SK-N-SH (cell line): ENCODE measurements at regions of chr11 and their contacts with region 1.

Region 1: DNA sequence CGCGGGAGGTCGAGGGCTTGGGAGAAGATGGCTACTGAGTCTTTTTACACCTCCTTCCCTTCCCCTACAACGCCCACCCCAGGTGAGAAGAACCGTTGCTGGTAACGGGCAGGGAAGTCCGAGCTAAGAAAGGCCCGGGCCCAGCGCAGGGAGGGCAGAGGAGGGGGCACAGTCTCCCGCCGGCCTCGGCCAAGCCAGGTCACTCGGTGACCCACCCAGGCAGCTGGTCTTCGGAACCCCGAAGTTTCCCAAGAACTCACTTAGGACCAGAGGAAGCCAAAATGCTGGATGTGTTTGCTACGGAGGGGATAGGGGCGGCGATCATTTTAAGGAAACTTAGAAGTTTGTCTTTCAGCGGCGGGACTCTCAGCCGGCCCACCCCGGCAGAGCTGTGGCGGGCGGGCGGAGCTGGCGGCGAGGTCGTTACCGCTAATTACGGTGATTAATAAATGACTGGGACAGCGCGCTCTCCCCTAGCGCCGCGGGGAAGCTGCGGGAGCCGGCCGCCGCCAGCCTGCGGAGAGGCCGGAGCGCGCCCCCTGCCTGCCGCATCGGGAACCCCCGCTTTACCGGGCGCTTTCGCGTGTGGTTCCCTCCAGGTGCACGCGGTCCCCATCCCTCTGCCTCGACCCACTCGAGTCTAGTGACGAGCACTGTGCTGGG is 820 bp downstream of the ROBO3 start:
- DNase-seq: peak; percentile 91
- H3K4me3 ChIP-seq: peak overlapping the region; percentile 43 to 64
- H3K27ac ChIP-seq: no peak overlapping the region
- H3K4me1 ChIP-seq: peaks cover 4 to 31% of the 10 kb centered on the region in 2 experiments; a peak in 1 of 4 replicates
- H3K27me3 ChIP-seq: peaks cover 78% of the 10 kb centered on the region
- CTCF ChIP-seq: peak; percentile 83
- EP300 ChIP-seq: no peak
- RAD21 ChIP-seq: peak; percentile 46

Region 2: GRCh38 chr11:124673333-124674167 is 192.5 kb before region 1 on chr11 and contains the starts of genes SIAE and SPA17:
- CTCF ChIA-PET with region 1: interaction called, 53 read pairs
- POLR2A ChIA-PET with region 1: interaction called, 4 read pairs
- DNase-seq: peak; percentile 97
- H3K4me3 ChIP-seq: peak within 1 kb of the TSS; percentile 87 to 89
- H3K27ac ChIP-seq: peak within 1 kb of the TSS; percentile 87 to 88
- H3K4me1 ChIP-seq: peaks cover 0 to 11% of the 10 kb centered on the region in 2 experiments; a peak in 1 of 4 replicates
- H3K27me3 ChIP-seq: no peaks in the 10 kb centered on the region
- CTCF ChIP-seq: no peak
- EP300 ChIP-seq: peak in 1 of 2 experiments; percentile 48; a peak in 1 of 4 replicates
- RAD21 ChIP-seq: no peak
- polyA plus RNA-seq, gene SIAE: 27.9 and 47.0 TPM in 2 replicates
- polyA plus RNA-seq, gene SPA17: 7.7 and 11.7 TPM in 2 replicates

Region 3: GRCh38 chr11:124800226-124800929 is 65.7 kb before region 1 on chr11 and contains the start of gene MSANTD2:
- CTCF ChIA-PET with region 1: interaction called, 18 read pairs
- POLR2A ChIA-PET with region 1: interaction called, 4 read pairs
- DNase-seq: peak; percentile 93
- H3K4me3 ChIP-seq: peak within 1 kb of the TSS; percentile 68 to 70
- H3K27ac ChIP-seq: peak within 1 kb of the TSS; percentile 95 to 97
- H3K4me1 ChIP-seq: peaks cover 8 to 10% of the 10 kb centered on the region in 2 experiments; a peak in 3 of 4 replicates
- H3K27me3 ChIP-seq: no peaks in the 10 kb centered on the region
- CTCF ChIP-seq: no peak
- EP300 ChIP-seq: 0 out of 4 replicates have a peak, but pooled peaks of 1 of the 2 experiments have one; percentile 8
- RAD21 ChIP-seq: 0 out of 2 replicates have a peak, but pooled peaks have one; percentile 2
- polyA plus RNA-seq, gene MSANTD2: 6.4 and 8.5 TPM in 2 replicates

Region 4: GRCh38 chr11:124846071-124846719 is 19.9 kb before region 1 on chr11:
- CTCF ChIA-PET with region 1: interaction called, 220 read pairs
- POLR2A ChIA-PET with region 1: no interaction called
- DNase-seq: no peak
- H3K4me3 ChIP-seq: no peak overlapping the region
- H3K27ac ChIP-seq: no peak overlapping the region
- H3K4me1 ChIP-seq: peaks cover 0 to 12% of the 10 kb centered on the region in 2 experiments; a peak in 1 of 4 replicates
- H3K27me3 ChIP-seq: peaks cover 68% of the 10 kb centered on the region; the same call in 1 of the 2 replicates
- CTCF ChIP-seq: no peak
- EP300 ChIP-seq: no peak
- RAD21 ChIP-seq: no peak

Region 5: GRCh38 chr11:124882339-124883071 is 16.5 kb after region 1 on chr11:
- CTCF ChIA-PET with region 1: interaction called, 55 read pairs
- POLR2A ChIA-PET with region 1: no interaction called
- DNase-seq: no peak
- H3K4me3 ChIP-seq: no peak overlapping the region
- H3K27ac ChIP-seq: peak overlapping the region in 1 of 2 experiments; percentile 24; a peak in 1 of 4 replicates
- H3K4me1 ChIP-seq: peaks cover 0 to 11% of the 10 kb centered on the region in 2 experiments; a peak in 1 of 4 replicates
- H3K27me3 ChIP-seq: no peaks in the 10 kb centered on the region
- CTCF ChIP-seq: no peak
- EP300 ChIP-seq: no peak
- RAD21 ChIP-seq: no peak

Region 6: GRCh38 chr11:124917115-124917637 is 51.1 kb after region 1 on chr11:
- CTCF ChIA-PET with region 1: no interaction called
- POLR2A ChIA-PET with region 1: no interaction called
- DNase-seq: no peak
- H3K4me3 ChIP-seq: no peak overlapping the region
- H3K27ac ChIP-seq: no peak overlapping the region
- H3K4me1 ChIP-seq: peaks cover 0 to 3% of the 10 kb centered on the region in 2 experiments; a peak in 1 of 4 replicates
- H3K27me3 ChIP-seq: no peaks in the 10 kb centered on the region
- CTCF ChIP-seq: no peak
- EP300 ChIP-seq: no peak
- RAD21 ChIP-seq: no peak

Region 7: GRCh38 chr11:125263268-125263790 is 397.3 kb after region 1 on chr11:
- CTCF ChIA-PET with region 1: no interaction called
- POLR2A ChIA-PET with region 1: no interaction called
- DNase-seq: peak; percentile 83
- H3K4me3 ChIP-seq: no peak overlapping the region
- H3K27ac ChIP-seq: no peak overlapping the region
- H3K4me1 ChIP-seq: peaks cover 0 to 14% of the 10 kb centered on the region in 2 experiments; a peak in 1 of 4 replicates
- H3K27me3 ChIP-seq: no peaks in the 10 kb centered on the region; the same call in 1 of the 2 replicates
- CTCF ChIP-seq: no peak
- EP300 ChIP-seq: no peak
- RAD21 ChIP-seq: no peak